ENCODE measurements at regions of chr1 and their contacts with region 1.

Region 1: GRCh38 chr1:110554871-110555801 is 36.2 kb upstream of the KCNA10 start:
- DNase-seq: peak; percentile 65
- ATAC-seq: peak; percentile 92
- H3K4me3 Mint-ChIP-seq: peak overlapping the region; percentile 13
- H3K27ac Mint-ChIP-seq: no peak overlapping the region
- H3K4me1 Mint-ChIP-seq: no peaks in the 10 kb centered on the region
- H3K27me3 Mint-ChIP-seq: peaks cover 29% of the 10 kb centered on the region
- CTCF ChIP-seq: peak; percentile 83

Region 2: DNA sequence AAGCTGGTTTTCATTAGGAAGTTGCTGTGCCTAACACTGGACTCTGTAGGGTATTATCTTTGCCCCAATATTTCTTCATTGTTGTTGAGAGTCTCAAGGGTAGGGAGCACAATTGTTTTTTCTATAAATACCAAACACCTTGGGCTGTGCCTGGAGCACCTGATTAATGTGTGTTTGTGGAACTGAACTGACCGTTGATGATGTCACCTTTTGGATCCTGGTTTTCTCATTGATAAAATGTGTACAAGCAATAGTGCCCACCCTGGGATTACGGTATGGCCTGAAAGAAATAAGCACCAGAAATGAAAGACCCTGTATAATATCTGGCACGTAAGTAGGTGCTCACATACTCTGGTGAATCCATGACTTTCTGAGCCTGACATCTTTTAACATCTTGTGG is 11.7 kb after region 1 on chr1:
- CTCF ChIA-PET with region 1: interaction called, 24 read pairs
- POLR2A ChIA-PET with region 1: no interaction called
- intact Hi-C with region 1: no loop called
- DNase-seq: no peak
- ATAC-seq: no peak
- H3K4me3 Mint-ChIP-seq: no peak overlapping the region
- H3K27ac Mint-ChIP-seq: no peak overlapping the region
- H3K4me1 Mint-ChIP-seq: no peaks in the 10 kb centered on the region
- H3K27me3 Mint-ChIP-seq: peaks cover 11% of the 10 kb centered on the region
- CTCF ChIP-seq: no peak

Region 3: GRCh38 chr1:110572751-110573150 is 17.6 kb after region 1 on chr1:
- CTCF ChIA-PET with region 1: interaction called, 24 read pairs
- POLR2A ChIA-PET with region 1: no interaction called
- intact Hi-C with region 1: no loop called
- DNase-seq: no peak
- ATAC-seq: no peak
- H3K4me3 Mint-ChIP-seq: no peak overlapping the region
- H3K27ac Mint-ChIP-seq: no peak overlapping the region
- H3K4me1 Mint-ChIP-seq: no peaks in the 10 kb centered on the region
- H3K27me3 Mint-ChIP-seq: peaks cover 11% of the 10 kb centered on the region
- CTCF ChIP-seq: no peak

Region 4: DNA sequence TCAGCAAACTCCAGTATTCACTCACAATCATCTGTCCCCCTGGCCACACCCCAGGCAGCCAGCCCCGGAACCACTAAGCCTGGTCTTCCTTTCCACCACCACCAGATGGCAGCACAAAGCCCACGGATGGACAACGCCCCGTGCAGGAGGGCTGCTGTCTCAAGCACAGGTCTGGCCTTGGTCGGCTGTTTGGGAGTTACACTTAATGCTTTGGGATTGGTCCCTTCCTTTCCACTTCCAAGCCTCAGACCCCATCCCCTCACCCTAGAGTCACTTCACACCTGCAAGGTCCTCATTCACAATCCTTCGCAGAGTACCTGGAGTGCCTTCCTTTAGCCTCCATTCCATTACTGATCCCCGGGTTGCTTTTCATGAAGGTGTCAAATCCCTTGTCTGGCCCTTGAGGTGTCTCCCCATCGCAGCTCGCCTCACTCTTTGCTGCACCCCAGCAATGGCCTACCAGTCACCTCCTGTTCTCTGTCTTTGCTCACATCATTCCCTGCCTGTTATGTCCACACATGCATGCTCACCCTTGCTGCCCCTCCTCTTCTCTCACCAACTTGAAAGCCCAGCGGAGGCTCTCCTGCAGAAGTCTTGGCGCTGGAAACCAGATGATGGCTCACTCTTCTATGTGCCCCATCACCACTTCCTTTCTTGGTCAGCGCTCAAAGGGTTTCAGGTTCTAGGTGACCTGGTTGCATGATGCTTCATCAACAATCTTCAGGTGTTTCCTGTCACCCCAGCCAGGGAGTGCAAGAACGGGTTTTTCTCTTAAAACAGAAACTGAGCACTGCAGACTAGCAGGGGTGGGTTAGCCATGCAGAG is 75.9 kb after region 1 on chr1:
- CTCF ChIA-PET with region 1: no interaction called
- POLR2A ChIA-PET with region 1: no interaction called
- intact Hi-C with region 1: no loop called
- DNase-seq: peak; percentile 89
- ATAC-seq: peak; percentile 69
- H3K4me3 Mint-ChIP-seq: no peak overlapping the region
- H3K27ac Mint-ChIP-seq: no peak overlapping the region
- H3K4me1 Mint-ChIP-seq: peaks cover 52% of the 10 kb centered on the region
- H3K27me3 Mint-ChIP-seq: no peaks in the 10 kb centered on the region
- CTCF ChIP-seq: peak; percentile 85

Measured in activated CD8-positive, alpha-beta T cell treated with anti-CD3 and anti-CD28 coated beads for 36 hours (primary cell).